ENCODE measurements at regions of chr12 and their contacts with region 1.

Region 1: DNA sequence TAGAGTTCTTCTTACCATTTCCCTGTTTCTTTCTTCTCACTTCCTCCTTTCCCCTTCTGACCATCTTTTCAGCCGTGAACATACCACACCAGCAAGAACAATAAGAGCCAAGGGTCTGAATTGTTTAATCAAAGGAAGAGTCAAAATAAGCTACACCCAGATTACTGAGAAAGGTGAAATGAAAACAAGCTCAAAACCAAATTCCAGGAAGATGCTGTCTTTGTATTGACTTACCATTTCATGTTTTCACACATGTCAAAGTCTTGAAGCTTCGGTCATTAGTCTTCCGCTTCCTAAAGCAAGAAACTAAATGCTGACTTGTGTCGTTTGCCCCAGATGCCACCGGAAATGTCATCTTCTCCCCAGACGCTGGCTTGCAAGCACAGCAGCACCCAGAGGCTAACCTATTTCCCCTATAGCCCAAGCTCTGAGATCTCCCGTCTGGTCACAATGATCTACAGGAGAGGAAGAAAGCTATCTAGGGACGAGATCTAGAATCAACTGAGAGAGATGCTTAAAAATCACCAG is 136.5 kb upstream of the AMIGO2 start:
- DNase-seq: peak; percentile 50 to 84 (median 75)
- H3K4me3 ChIP-seq: peak overlapping the region; percentile 92
- H3K4me3 Mint-ChIP-seq: peak overlapping the region; percentile 89 to 95 (median 94)
- H3K27ac ChIP-seq: peak overlapping the region; percentile 85
- H3K27ac Mint-ChIP-seq: peak overlapping the region; percentile 87 to 100 (median 94)
- H3K4me1 ChIP-seq: peaks cover 8% of the 10 kb centered on the region
- H3K4me1 Mint-ChIP-seq: peaks cover 17 to 43% (median 37%) of the 10 kb centered on the region in 3 donors
- H3K27me3 ChIP-seq: no peaks in the 10 kb centered on the region
- H3K27me3 Mint-ChIP-seq: peaks cover 0 to 2% of the 10 kb centered on the region in 2 donors

Region 2: DNA sequence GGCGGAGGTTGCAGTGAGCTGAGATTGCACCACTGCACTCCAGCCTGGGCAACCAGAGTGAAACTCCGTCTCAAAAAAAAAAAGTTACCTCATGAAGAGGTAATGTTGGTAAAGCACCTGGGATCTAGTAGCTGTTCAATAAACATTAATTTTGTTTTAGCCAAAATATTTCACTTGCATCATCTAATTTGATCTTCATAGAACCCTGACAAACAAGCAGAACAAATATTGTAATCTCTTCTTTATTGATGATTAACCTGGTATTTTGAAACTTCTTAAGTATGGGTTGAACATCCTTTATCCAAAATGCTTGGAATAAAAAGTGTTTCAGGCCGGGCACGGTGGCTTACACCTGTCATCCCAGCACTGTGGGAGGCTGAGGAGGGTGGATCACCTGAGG is 12.6 kb after region 1 on chr12:
- CTCF ChIA-PET with region 1: interaction called, 11 read pairs
- POLR2A ChIA-PET with region 1: interaction called, 6 read pairs
- DNase-seq: no peak
- H3K4me3 ChIP-seq: no peak overlapping the region
- H3K4me3 Mint-ChIP-seq: peak overlapping the region in 2 of 7 donors; percentile 11 to 24
- H3K27ac ChIP-seq: no peak overlapping the region
- H3K27ac Mint-ChIP-seq: peak overlapping the region in 7 of 8 donors; percentile 23 to 88 (median 80)
- H3K4me1 ChIP-seq: peaks cover 65% of the 10 kb centered on the region
- H3K4me1 Mint-ChIP-seq: peaks cover 70 to 86% (median 85%) of the 10 kb centered on the region in 3 donors
- H3K27me3 ChIP-seq: no peaks in the 10 kb centered on the region
- H3K27me3 Mint-ChIP-seq: no peaks in the 10 kb centered on the region